GM23248 (cell line): ENCODE measurements at regions of chr7 and their contacts with region 1.

Region 1: GRCh38 chr7:111752022-111752582 is 189.8 kb upstream of the IMMP2L start:
- DNase-seq: peak; percentile 67
- H3K4me3 ChIP-seq: no peak overlapping the region
- H3K27ac ChIP-seq: no peak overlapping the region
- H3K4me1 ChIP-seq: 0 out of 2 replicates have a peak, but pooled peaks cover 6% of the 10 kb centered on the region
- H3K27me3 ChIP-seq: no peaks in the 10 kb centered on the region

Region 2: DNA sequence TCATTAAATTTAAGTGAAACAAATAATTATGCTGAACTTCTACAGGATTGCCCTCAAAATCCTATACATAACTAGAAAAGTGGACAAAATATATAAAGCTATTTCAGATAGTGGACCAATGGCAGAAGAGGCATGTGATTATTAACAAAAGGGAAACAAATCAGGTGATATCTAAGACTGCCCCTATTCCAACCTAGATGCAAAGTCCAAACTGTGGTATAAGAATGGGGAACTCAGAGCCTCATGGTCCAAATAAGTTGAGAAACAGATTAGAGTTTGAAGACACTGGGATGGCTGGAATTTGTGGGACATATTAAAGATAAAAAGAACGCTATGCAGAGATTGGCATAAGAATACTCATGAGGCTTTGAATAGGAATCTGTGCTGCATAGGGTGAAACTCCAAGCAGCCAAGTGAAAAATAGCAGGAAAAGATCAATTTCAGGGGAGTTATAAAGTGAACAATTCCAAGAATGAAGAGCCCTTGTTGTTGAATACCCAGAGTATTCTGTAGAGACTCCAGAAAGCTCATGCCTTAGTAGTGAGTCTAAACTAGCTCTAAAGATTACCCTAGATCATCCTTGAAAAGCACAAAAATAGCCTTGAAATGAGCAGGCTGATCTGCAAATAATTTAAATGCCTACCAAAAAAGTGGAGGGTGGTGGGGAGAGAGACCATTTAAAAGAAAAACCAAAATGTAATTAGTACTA is 342.2 kb before region 1 on chr7:
- in situ Hi-C with region 1: no loop called
- DNase-seq: peak; percentile 57
- H3K4me3 ChIP-seq: peak overlapping the region; percentile 10; the same call in 1 of the 2 replicates
- H3K27ac ChIP-seq: peak overlapping the region; percentile 40
- H3K4me1 ChIP-seq: peaks cover 20% of the 10 kb centered on the region
- H3K27me3 ChIP-seq: no peaks in the 10 kb centered on the region

Region 3: DNA sequence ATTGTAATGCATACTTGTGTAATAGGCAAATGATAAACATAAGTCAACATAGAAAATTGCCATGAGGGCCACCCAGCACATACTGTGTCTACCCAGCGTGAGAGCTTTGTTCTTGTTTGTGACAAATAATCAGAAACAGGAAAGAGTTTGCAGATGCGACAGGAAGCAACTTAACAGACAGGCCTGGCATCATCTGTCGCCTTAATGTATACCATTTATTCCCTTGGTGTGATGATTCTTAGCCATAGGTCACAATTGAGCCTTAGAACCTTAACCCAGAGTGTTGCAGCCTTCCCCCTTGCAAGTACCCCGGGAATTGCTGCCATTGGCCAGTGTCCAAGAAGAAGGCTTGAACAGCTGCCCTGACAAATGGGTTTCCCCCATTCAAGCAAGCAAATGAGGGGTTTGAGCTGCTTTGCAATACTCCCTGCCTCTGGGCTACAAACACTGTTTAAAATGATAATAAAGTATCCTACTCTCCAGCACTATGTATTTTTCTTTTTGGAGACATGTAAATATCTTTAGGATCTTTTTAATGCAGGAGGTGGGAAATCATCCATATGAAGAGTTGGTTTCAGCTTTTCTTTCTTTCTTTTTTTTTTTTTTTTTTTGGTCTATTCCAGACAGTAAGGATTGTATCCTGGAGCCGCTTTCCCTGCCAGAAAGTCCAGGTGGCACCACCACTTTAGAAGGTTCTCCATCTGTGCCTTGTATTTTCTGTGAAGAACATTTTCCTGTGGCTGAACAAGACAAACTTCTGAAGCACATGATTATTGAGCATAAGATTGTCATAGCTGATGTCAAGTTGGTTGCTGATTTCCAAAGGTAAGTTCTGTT is 534.4 kb after region 1 on chr7:
- in situ Hi-C with region 1: no loop called
- DNase-seq: no peak
- H3K4me3 ChIP-seq: no peak overlapping the region
- H3K27ac ChIP-seq: no peak overlapping the region
- H3K4me1 ChIP-seq: peaks cover 17% of the 10 kb centered on the region
- H3K27me3 ChIP-seq: no peaks in the 10 kb centered on the region

Region 4: GRCh38 chr7:112422842-112423496 is 670.9 kb after region 1 on chr7:
- in situ Hi-C with region 1: loop called (anchors 25 kb)
- DNase-seq: peak; percentile 96
- H3K4me3 ChIP-seq: peak overlapping the region; percentile 33; the same call in 1 of the 2 replicates
- H3K27ac ChIP-seq: peak overlapping the region; percentile 84
- H3K4me1 ChIP-seq: peaks cover 36% of the 10 kb centered on the region
- H3K27me3 ChIP-seq: no peaks in the 10 kb centered on the region